ENCODE measurements at regions of chr14 and their contacts with region 1.

Region 1: GRCh38 chr14:32382704-32383103 is 53.6 kb downstream of the AKAP6 start:
- DNase-seq: no peak

Region 2: DNA sequence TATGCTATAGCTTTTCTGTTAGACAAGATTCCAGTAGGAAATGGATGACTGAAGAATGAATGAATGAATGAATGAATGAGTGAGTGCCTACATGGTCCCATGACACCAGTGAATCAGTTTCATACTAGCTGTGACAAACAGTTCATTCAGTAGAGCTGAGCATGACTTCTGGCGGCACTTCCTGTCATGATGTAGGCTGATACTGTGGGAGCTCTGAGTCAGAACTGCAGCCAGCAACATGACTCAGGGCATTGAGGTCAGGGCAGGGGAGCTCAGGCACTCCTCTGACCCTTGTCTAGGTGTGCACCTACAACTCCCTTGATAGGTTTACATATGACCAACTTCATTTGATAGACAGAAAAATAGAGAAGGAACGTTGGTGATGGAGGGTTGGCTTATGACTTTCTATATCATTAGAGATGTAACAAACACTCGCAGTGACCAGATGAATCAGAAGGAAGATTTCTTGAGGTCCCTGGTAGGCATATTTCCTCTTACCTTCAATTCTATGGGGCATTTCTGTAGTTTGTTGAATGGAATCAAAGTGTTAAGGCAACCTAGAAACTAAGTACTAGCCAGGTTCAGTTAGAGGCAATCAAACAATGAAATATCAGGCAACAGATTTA is 444.9 kb before region 1 on chr14:
- intact Hi-C with region 1: loop called (anchors 10 kb)
- DNase-seq: no peak

Region 3: DNA sequence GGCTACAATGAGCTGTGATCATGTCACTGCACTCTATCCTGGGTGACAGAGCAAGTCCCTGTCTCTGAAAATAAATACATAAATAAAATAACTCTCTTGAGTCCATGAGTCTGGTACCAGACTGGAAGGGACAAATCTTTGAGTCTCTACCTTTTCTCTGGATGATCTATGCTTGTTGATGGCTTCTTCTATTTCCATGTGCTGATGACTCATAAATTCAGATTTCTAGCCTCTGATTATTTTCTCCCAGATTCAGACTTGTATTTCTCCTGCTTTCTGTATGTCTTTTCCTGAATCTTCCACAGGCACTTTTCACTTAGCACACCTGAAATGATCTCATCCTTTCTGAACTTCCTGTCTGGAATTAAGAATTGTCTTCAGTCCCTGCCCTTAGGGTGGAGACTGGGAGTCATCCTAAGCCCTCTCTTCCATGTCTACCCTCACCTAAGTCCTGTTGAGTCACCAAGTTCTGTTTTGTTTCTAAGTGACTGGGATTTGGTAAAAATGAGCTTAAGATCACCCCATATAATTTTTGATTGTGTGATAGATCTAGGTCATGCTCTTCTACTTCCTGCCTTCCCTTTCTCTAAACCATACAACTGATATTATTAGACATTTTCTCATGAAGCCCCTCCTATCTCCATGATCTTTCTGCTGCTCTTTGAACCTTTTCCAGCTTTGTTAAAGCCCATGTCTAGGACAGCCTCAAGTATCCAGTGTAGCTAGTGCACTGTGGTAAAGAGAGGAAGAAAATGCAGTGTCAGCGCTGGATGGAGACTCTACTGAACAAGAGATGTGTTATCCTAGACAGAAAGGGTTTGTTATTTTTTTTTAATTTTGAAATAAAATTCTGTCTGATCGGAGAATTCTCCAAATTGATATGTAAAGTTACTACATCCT is 40.5 kb before region 1 on chr14:
- intact Hi-C with region 1: no loop called
- DNase-seq: no peak

Region 4: DNA sequence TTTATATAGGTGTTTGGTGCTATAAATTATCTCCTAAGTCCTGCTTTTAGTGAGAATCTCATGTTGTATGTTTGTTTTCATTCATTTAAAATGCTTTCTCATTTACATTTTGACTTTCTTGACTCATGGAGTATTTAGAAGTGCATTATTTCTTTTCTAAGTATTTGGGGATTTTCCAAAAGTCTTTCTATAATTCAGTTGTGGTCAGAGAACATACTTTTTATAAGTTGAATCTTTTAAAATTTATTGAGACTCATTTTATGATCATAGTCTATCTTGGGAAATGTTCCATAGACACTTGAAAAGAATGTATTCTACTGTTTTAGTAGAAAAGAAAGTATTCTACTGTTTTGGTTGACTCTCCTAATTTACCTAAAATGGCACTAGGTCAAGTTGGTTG is 114.5 kb after region 1 on chr14:
- intact Hi-C with region 1: no loop called
- DNase-seq: no peak

Measured in cardiac septum (tissue), 1 donor.